ENCODE measurements at regions of chr9 and their contacts with region 1.

Region 1: DNA sequence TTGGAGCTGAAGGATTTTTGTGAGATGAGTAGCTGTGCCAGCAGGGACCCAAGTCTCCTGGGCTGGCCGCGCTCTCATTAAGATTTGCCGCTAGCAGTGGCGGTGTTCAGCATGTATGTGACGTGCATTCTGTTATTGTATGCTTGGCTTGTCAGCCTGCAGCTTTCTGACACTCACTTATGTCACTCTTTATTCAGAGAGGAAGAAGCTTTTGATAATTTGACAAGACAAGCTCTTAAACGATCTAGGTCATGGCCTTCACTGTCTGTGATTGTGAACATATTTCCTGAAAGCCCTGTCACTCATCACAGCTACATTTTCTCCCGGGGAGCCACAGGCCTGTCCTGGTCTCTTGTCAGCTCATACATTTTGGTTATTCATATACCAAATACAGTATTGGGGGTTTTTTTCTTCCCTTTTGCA is 98.2 kb upstream of the GRHPR start:
- DNase-seq: no peak
- ATAC-seq: peak in 3 of 4 donors; percentile 50 to 83 (median 57)
- H3K4me3 ChIP-seq: no peak overlapping the region
- H3K27ac ChIP-seq: no peak overlapping the region
- H3K4me1 ChIP-seq: no peaks in the 10 kb centered on the region
- H3K27me3 ChIP-seq: no peaks in the 10 kb centered on the region
- CTCF ChIP-seq: no peak
- POLR2A ChIP-seq: no peak

Region 2: GRCh38 chr9:37350486-37351190 is 26.4 kb after region 1 on chr9:
- intact Hi-C with region 1: loop called in 1 of 10 experiments (anchors 5 kb)
- DNase-seq: no peak
- ATAC-seq: no peak
- H3K4me3 ChIP-seq: no peak overlapping the region
- H3K27ac ChIP-seq: no peak overlapping the region
- H3K4me1 ChIP-seq: peaks cover 0 to 12% (median 0%) of the 10 kb centered on the region in 12 donors
- H3K27me3 ChIP-seq: no peaks in the 10 kb centered on the region
- CTCF ChIP-seq: no peak
- POLR2A ChIP-seq: no peak

Measured in heart left ventricle (tissue), 16 donors.